RWPE1 (cell line): ENCODE measurements at regions of chr13 and their contacts with region 1.

Region 1: DNA sequence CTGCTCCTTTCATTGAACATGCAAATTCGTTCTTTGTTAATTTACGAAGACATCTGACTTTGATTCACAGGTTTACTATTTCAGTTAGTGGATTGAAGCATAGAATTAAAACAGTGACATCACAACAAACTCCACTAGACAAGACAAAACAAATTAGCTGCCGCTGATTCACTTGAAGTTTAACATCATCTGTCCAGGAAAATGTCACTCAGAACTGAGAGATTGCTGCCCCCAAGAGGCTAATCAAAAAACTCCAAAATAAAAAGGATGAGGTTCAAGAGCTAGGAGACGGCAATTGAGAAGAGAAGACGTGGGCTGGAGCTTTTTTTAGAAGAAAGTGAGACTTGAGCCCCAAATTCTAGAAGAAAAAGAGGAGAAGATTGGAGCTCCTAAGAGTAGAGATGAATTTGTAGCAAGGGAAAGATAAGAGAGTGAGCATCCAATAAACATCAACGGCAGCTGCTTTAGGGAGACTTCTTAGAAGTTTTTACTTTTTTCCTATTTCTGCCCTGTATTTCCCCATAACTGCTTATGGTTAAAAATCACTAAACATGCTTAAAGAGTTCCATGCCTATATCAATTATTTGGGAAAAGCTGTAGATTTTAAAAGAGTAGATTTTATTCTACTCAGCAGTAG is 40.8 kb upstream of the TPP2 start:
- DNase-seq: peak; percentile 45
- H3K27ac ChIP-seq: no peak overlapping the region
- CTCF ChIP-seq: peak; percentile 67

Region 2: DNA sequence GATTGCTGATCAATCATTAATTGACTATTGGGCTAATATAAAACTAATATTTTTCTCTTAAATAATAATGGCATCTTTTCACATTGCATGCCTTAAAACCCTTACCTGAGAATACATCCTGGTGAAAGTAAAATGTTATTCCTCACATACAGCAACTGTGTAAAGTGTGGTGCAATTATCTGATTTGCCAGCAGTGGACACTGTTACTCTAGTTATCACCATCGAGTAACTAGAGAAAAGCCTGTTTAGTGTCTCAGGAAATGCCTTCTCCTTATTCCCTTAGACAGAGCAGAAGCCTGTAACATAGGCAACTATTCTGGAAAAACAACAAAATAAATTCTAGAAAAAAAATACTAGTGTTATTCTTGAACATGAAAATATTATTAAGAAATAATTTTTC is 614.0 kb before region 1 on chr13:
- CTCF ChIA-PET with region 1: interaction called, 19 read pairs
- POLR2A ChIA-PET with region 1: no interaction called
- DNase-seq: peak; percentile 20
- H3K27ac ChIP-seq: no peak overlapping the region
- CTCF ChIP-seq: peak; percentile 58

Region 3: GRCh38 chr13:102236830-102237229 is 319.2 kb before region 1 on chr13:
- CTCF ChIA-PET with region 1: no interaction called
- POLR2A ChIA-PET with region 1: interaction called, 12 read pairs
- DNase-seq: no peak
- H3K27ac ChIP-seq: no peak overlapping the region
- CTCF ChIP-seq: no peak

Region 4: GRCh38 chr13:102566513-102566912 is 10.5 kb after region 1 on chr13:
- CTCF ChIA-PET with region 1: interaction called, 11 read pairs
- POLR2A ChIA-PET with region 1: no interaction called
- DNase-seq: no peak
- H3K27ac ChIP-seq: no peak overlapping the region
- CTCF ChIP-seq: no peak

Region 5: GRCh38 chr13:102598061-102598460 is 42.0 kb after region 1 on chr13:
- CTCF ChIA-PET with region 1: no interaction called
- POLR2A ChIA-PET with region 1: no interaction called
- DNase-seq: no peak
- H3K27ac ChIP-seq: no peak overlapping the region
- CTCF ChIP-seq: no peak